ENCODE measurements at regions of chr4 and their contacts with region 1.

Region 1: DNA sequence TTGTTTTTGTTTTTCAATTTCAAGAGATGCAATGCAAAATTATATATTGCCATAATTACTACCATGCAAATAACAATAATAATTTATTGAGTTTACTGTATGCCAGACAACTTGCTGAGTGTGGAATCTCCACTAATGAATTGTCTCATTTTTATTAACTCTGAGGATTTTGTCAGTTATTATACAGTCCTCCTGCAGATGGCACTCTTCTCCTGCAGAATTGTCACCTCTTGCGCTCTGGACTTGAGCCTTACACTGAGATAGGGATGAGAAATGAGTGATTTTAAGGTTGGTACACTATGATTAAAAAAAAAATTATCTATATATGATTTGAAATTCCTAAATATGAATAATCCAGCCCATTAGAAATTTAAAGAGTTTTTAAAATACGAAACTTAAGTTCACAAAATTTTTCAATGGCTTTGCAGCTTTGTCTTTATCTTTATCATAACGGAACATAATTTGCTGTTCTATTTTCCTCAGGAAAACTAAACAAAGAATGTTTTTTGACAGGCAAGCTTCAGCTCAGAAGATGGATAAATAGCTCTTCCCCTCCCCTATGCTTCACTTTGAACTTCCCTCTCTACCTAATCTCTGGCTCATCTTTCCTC is 12.7 kb upstream of the PAQR3 start:
- ATAC-seq: peak; percentile 43 to 67 (median 57)
- H3K4me3 ChIP-seq: no peak overlapping the region
- H3K27ac ChIP-seq: no peak overlapping the region
- H3K4me1 ChIP-seq: peaks cover 4 to 17% of the 10 kb centered on the region in 2 donors

Region 2: DNA sequence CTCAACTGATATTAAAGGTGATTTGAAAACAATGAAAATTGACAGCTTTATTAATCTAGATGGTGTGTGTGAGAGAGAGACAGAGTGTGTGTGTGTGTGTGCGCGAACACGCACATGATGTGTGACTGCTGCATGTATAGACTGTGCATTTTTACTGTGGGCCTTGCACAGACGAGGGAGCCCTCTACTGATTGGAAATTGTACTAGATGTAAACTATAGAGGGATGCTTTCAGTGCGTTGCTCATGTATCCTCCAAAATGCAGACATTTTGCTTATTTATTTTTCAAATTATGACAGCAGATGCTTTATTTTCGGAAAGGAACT is 624.4 kb after region 1 on chr4:
- in situ Hi-C with region 1: loop called in 1 of 9 experiments (anchors 10 kb)
- ATAC-seq: peak; percentile 81 to 98 (median 94)
- H3K4me3 ChIP-seq: no peak overlapping the region
- H3K27ac ChIP-seq: no peak overlapping the region
- H3K4me1 ChIP-seq: peaks cover 0 to 3% of the 10 kb centered on the region in 2 donors

Region 3: DNA sequence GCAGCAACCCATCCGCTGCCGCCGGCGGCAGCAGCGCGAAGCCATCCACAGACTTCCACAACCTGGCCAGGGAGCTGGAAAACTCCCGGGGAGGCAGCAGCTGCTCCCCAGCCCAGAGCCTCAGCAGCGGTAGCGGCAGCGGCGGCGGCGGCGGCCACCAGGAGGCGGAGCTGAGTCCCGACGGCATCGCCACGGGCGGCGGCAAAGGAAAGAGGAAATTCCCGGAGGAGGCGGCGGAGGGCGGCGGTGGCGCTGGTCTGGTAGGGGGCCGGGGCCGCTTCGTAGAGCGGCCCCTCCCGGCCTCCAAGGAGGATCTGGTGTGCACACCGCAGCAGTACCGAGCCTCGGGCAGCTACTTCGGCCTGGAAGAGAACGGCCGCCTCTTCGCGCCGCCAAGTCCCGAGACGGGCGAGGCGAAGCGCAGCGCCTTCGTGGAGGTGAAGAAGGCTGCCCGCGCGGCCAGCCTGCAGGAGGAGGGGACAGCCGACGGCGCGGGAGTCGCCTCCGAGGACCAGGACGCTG is 1250.3 kb after region 1 on chr4:
- in situ Hi-C with region 1: loop called in 4 of 9 experiments (anchors 25 kb)
- ATAC-seq: peak; percentile 42 to 81 (median 68)
- H3K4me3 ChIP-seq: peak overlapping the region; percentile 20 to 94 (median 43)
- H3K27ac ChIP-seq: peak overlapping the region; percentile 74 to 77
- H3K4me1 ChIP-seq: peaks cover 5 to 17% of the 10 kb centered on the region in 2 donors